B cell (primary cell): ENCODE measurements at regions of chr4 and their contacts with region 1.

Region 1: DNA sequence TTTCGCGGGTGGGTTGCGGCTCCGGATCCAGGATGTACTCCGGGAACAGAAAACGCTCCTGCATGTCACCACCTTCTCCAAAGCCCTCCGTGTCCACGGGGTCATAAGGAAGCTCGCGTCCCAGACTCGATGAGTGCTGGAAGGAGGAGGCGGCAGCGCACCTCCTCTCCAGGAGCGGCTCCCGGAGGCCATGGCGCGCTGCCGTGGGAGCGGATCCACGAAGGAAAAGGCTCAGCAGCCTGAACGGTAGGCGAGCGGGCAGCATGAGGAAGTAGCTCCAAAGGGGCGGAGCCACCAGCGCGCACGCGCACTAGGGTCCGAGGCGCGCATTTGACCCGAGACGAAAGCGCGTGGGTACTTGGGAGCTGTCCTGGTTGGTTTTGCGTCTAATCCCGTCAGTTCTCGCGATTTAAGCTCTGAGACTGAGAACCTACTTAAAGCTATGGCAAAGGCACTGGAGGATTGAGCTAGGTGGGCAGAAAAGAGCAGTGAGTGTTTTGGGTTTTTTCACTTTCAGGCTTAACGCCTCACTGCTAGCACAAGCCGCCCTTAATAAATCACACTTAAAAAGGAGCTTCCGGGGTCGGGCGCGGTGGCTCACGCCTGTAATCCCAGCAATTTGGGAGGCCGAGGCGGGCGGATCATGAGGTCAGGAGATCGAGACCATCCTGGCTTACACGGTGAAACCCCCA is at the start of gene NOA1:
- DNase-seq: peak; percentile 99
- ATAC-seq: peak; percentile 82
- H3K4me3 ChIP-seq: peak within 1 kb of the TSS; percentile 74 to 95 (median 91)
- H3K4me3 Mint-ChIP-seq: peak within 1 kb of the TSS; percentile 100
- H3K27ac ChIP-seq: peak within 1 kb of the TSS; percentile 73 to 84
- H3K27ac Mint-ChIP-seq: peak within 1 kb of the TSS; percentile 98
- H3K4me1 ChIP-seq: peaks cover 35 to 40% of the 10 kb centered on the region in 2 donors
- H3K4me1 Mint-ChIP-seq: peaks cover 57% of the 10 kb centered on the region
- H3K27me3 ChIP-seq: no peaks in the 10 kb centered on the region
- H3K27me3 Mint-ChIP-seq: no peaks in the 10 kb centered on the region
- CTCF ChIP-seq: no peak
- total RNA-seq, gene NOA1: 22.7 and 24.0 TPM in 2 replicates

Region 2: DNA sequence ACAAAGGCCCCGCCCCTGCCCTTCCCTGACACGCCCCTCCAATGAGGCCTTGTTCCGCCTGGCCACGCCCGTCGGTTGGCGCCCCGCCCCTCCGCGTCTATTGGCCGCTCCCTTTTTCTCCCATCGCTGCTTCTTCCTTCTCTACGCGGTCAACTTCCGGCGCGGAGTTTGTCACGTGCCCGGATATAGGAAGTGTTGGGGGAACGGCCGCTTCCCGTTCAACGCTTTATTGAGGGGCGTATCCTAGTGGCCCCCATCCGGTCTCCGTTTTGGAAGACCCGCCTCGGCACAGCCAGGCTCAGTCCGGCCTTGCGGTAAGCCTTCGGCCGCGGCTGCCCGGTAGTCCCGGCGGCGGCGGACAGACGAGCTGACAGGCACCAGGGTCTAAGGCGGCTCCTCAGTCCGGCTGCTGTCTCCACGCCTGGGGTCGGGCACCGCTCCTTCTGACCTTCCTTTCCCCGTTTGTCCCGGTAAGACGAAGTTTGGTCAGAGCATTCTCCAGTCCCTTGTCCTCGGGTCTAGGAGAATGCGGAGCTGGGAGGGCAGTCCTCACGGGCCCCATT is 1123.9 kb before region 1 on chr4 and contains the start of gene EXOC1:
- CTCF ChIA-PET with region 1: no interaction called
- POLR2A ChIA-PET with region 1: no interaction called
- intact Hi-C with region 1: loop called (anchors 2 kb)
- DNase-seq: peak; percentile 97
- ATAC-seq: peak; percentile 100
- H3K4me3 ChIP-seq: peak within 1 kb of the TSS; percentile 85 to 98 (median 97)
- H3K4me3 Mint-ChIP-seq: no peak within 1 kb of the TSS
- H3K27ac ChIP-seq: peak within 1 kb of the TSS; percentile 71 to 86
- H3K27ac Mint-ChIP-seq: peak within 1 kb of the TSS; percentile 94
- H3K4me1 ChIP-seq: peaks cover 11 to 12% of the 10 kb centered on the region in 2 donors
- H3K4me1 Mint-ChIP-seq: peaks cover 13% of the 10 kb centered on the region
- H3K27me3 ChIP-seq: peaks cover 0 to 14% (median 2%) of the 10 kb centered on the region in 4 experiments
- H3K27me3 Mint-ChIP-seq: peaks cover 12% of the 10 kb centered on the region
- CTCF ChIP-seq: no peak
- total RNA-seq, gene EXOC1: 42.5 and 46.7 TPM in 2 replicates

Region 3: DNA sequence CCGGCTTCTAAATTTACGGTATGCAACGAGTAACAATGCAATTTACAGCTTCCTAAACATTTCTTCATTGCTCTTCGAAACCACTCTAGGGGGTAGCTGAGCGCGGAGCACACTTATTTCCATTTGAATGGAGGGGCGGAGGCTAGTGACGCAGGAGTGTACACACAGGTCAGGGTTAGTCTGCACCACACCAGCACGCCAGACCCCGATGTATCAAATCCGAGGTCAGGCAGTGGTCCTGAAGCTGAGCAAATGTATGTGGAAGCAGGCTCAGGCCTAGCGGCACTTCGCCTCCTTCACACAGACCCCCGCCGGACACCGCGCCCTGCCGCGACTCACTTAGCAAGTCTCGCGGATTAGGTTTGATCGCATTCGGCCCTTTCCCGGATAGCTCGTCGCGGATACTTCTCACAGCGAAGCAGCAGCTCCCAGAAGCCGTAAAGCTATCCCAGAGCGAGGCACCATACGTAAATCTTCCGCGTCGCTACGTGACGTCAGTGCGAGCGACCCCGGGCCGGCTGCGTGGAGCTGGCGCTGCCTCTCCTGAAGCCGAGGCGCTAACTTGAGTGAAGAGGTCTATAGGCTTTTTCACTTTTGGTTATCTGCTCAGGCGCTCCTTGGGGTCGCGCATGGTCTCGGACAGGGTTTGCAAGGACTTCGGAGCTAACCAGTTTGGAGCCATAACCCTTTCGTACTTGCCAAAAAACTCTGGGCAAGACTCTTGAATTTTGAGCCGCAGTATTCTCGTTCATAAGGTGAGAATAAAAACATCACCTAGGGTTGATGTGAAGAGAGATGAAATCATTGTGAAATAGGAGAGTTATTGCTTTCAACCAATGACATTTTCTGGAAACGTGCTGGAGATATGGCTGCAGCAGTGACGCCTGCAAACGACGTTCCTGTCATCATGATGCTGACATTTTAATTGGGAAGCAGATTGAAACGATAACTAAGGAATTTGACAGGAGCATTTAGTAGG is 590.2 kb before region 1 on chr4 and contains the start of gene AASDH:
- CTCF ChIA-PET with region 1: interaction called, 4 read pairs
- POLR2A ChIA-PET with region 1: interaction called, 10 read pairs
- intact Hi-C with region 1: loop called (anchors 1 kb)
- DNase-seq: peak; percentile 97
- ATAC-seq: peak; percentile 94
- H3K4me3 ChIP-seq: peak within 1 kb of the TSS; percentile 57 to 97 (median 81)
- H3K4me3 Mint-ChIP-seq: peak within 1 kb of the TSS; percentile 88
- H3K27ac ChIP-seq: peak within 1 kb of the TSS; percentile 86 to 89
- H3K27ac Mint-ChIP-seq: peak within 1 kb of the TSS; percentile 99
- H3K4me1 ChIP-seq: peaks cover 14% of the 10 kb centered on the region in 2 donors
- H3K4me1 Mint-ChIP-seq: peaks cover 30% of the 10 kb centered on the region
- H3K27me3 ChIP-seq: no peaks in the 10 kb centered on the region
- H3K27me3 Mint-ChIP-seq: no peaks in the 10 kb centered on the region
- CTCF ChIP-seq: no peak
- total RNA-seq, gene AASDH: 15.2 and 17.2 TPM in 2 replicates

Region 4: GRCh38 chr4:56821381-56822243 is 155.9 kb before region 1 on chr4 and contains the start of gene SPINK2:
- CTCF ChIA-PET with region 1: no interaction called
- POLR2A ChIA-PET with region 1: no interaction called
- intact Hi-C with region 1: loop called (anchors 5 kb)
- DNase-seq: peak; percentile 82
- ATAC-seq: peak; percentile 90
- H3K4me3 ChIP-seq: peak within 1 kb of the TSS; percentile 36 to 66 (median 62)
- H3K4me3 Mint-ChIP-seq: peak within 1 kb of the TSS; percentile 83
- H3K27ac ChIP-seq: no peak within 1 kb of the TSS
- H3K27ac Mint-ChIP-seq: peak within 1 kb of the TSS; percentile 8
- H3K4me1 ChIP-seq: peaks cover 26 to 32% of the 10 kb centered on the region in 2 donors
- H3K4me1 Mint-ChIP-seq: peaks cover 35% of the 10 kb centered on the region
- H3K27me3 ChIP-seq: peaks cover 0 to 18% (median 4%) of the 10 kb centered on the region in 4 experiments
- H3K27me3 Mint-ChIP-seq: peaks cover 4% of the 10 kb centered on the region
- CTCF ChIP-seq: peak; percentile 37
- total RNA-seq, gene SPINK2: 0.63 and 0.94 TPM in 2 replicates

Region 5: DNA sequence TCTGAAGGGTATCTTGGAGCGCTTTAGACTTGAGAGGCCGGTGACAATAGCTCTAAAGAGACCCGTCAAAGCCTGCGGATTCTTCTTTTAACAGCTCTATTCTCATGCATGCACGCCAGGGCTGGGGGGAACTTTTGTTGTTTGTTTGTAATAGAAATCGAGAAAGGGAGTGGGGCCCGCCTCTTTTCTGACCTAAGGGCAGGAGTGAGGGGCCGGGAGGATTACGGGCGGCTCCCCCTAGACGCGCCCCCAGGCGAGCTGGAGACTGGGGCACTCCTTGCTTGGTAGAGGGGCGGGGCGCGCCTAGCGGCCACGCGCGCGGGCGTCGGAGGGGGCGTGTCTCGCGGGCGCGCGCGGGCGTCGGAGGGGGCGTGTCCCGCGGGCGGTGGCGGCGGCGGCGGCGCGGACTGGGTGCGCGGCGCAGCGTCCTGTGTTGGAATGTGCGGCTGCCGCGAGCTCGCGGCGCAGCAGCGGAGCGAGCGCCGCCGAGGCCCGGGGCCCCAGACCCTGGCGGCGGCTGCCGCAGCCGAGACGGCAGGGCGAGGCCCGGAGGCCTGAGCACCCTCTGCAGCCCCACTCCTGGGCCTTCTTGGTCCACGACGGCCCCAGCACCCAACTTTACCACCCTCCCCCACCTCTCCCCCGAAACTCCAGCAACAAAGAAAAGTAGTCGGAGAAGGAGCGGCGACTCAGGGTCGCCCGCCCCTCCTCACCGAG is 69.8 kb before region 1 on chr4 and contains the start of gene REST:
- CTCF ChIA-PET with region 1: interaction called, 13 read pairs
- POLR2A ChIA-PET with region 1: interaction called, 18 read pairs
- intact Hi-C with region 1: loop called (anchors 1 kb)
- DNase-seq: peak; percentile 92
- ATAC-seq: peak; percentile 65
- H3K4me3 ChIP-seq: peak within 1 kb of the TSS; percentile 62 to 98 (median 88)
- H3K4me3 Mint-ChIP-seq: peak within 1 kb of the TSS; percentile 93
- H3K27ac ChIP-seq: peak within 1 kb of the TSS; percentile 47 to 77
- H3K27ac Mint-ChIP-seq: peak within 1 kb of the TSS; percentile 92
- H3K4me1 ChIP-seq: peaks cover 29 to 35% of the 10 kb centered on the region in 2 donors
- H3K4me1 Mint-ChIP-seq: peaks cover 42% of the 10 kb centered on the region
- H3K27me3 ChIP-seq: no peaks in the 10 kb centered on the region
- H3K27me3 Mint-ChIP-seq: peaks cover 3% of the 10 kb centered on the region
- CTCF ChIP-seq: no peak
- total RNA-seq, gene REST: 59.4 and 61.1 TPM in 2 replicates

Region 6: DNA sequence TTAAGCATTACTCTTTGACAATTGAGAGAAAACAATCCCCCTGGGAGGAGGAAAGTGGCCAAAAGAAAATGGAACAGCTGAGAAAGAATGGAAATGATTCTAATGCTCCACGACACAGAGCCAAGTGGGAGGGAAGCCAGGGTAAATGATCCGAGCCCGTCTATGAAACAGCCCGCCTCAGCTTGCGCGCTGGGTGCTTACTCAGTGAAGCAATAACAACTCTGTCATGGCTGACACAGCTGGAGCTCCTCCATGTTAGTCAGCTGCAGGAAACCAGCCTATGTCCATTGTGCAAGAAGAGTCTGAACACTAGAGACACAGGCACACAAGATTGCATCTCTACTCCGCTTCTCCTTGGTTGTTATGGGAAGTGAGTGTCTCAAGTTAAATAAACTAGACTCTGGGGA is 19.4 kb before region 1 on chr4:
- CTCF ChIA-PET with region 1: interaction called, 14 read pairs
- POLR2A ChIA-PET with region 1: no interaction called
- intact Hi-C with region 1: no loop called
- DNase-seq: no peak
- ATAC-seq: no peak
- H3K4me3 ChIP-seq: no peak overlapping the region
- H3K4me3 Mint-ChIP-seq: no peak overlapping the region
- H3K27ac ChIP-seq: no peak overlapping the region
- H3K27ac Mint-ChIP-seq: no peak overlapping the region
- H3K4me1 ChIP-seq: no peaks in the 10 kb centered on the region
- H3K4me1 Mint-ChIP-seq: no peaks in the 10 kb centered on the region
- H3K27me3 ChIP-seq: no peaks in the 10 kb centered on the region
- H3K27me3 Mint-ChIP-seq: no peaks in the 10 kb centered on the region
- CTCF ChIP-seq: no peak

Region 7: DNA sequence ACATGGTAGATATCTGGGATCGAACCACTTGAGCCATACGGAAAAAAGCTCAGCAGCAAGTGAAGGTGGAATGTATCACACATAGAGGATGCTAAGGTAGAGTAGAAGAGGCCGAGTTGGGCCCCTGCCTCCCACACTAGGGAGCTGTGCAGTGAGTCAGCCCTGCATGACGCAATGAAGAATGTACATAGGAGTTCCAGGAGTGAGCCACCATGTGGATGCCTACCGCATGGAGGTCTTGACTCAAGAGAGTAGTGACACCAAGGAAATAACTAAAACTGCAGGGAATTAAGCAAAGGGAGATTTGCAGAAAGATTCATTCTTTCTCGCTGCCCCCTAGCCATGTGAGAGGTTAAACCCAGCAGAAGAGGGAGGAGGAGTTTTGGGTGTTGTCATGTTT is 522.3 kb after region 1 on chr4:
- CTCF ChIA-PET with region 1: no interaction called
- POLR2A ChIA-PET with region 1: no interaction called
- intact Hi-C with region 1: no loop called
- DNase-seq: no peak
- ATAC-seq: no peak
- H3K4me3 ChIP-seq: no peak overlapping the region
- H3K4me3 Mint-ChIP-seq: no peak overlapping the region
- H3K27ac ChIP-seq: no peak overlapping the region
- H3K27ac Mint-ChIP-seq: no peak overlapping the region
- H3K4me1 ChIP-seq: no peaks in the 10 kb centered on the region
- H3K4me1 Mint-ChIP-seq: no peaks in the 10 kb centered on the region
- H3K27me3 ChIP-seq: no peaks in the 10 kb centered on the region
- H3K27me3 Mint-ChIP-seq: no peaks in the 10 kb centered on the region
- CTCF ChIP-seq: no peak